Activated B cell treated with CpG ODN at 0.5 μM for 24 hours (primary cell): ENCODE measurements at regions of chr2 and their contacts with region 1.

Region 1: GRCh38 chr2:197216361-197216979 is 94.1 kb downstream of the ANKRD44 start:
- DNase-seq: no peak
- ATAC-seq: peak; percentile 71
- H3K4me3 Mint-ChIP-seq: peak overlapping the region; percentile 72
- H3K27ac Mint-ChIP-seq: peak overlapping the region; percentile 98
- H3K4me1 Mint-ChIP-seq: peaks cover 91% of the 10 kb centered on the region
- H3K27me3 Mint-ChIP-seq: no peaks in the 10 kb centered on the region
- CTCF ChIP-seq: no peak

Region 2: GRCh38 chr2:197184959-197185586 is 31.4 kb before region 1 on chr2:
- CTCF ChIA-PET with region 1: no interaction called
- POLR2A ChIA-PET with region 1: no interaction called
- intact Hi-C with region 1: no loop called
- DNase-seq: no peak
- ATAC-seq: peak; percentile 40
- H3K4me3 Mint-ChIP-seq: no peak overlapping the region
- H3K27ac Mint-ChIP-seq: peak overlapping the region; percentile 31
- H3K4me1 Mint-ChIP-seq: peaks cover 71% of the 10 kb centered on the region
- H3K27me3 Mint-ChIP-seq: no peaks in the 10 kb centered on the region
- CTCF ChIP-seq: no peak

Region 3: DNA sequence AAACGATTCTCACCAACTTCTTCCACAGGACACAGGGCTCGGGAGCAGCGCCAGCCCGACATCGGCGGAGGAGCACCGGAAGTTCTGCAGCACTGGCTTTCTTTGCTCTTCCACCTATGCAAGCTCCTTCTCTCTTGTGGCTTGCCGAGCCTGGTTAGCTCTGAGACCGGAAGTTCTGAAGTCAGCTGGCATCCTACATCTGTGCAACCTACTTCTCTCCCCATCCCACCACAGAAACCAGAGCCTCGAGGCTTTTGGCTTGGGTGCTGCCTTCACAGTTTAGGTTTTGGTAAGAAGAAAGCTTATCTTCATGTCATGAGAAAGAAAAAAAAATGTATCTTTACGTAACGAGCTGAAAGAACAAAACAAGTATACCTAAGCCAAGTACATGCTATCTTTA is 17.6 kb before region 1 on chr2:
- CTCF ChIA-PET with region 1: interaction called, 4 read pairs
- POLR2A ChIA-PET with region 1: interaction called, 15 read pairs
- intact Hi-C with region 1: loop called (anchors 1 kb)
- DNase-seq: peak; percentile 56
- ATAC-seq: peak; percentile 94
- H3K4me3 Mint-ChIP-seq: peak overlapping the region; percentile 88
- H3K27ac Mint-ChIP-seq: peak overlapping the region; percentile 96
- H3K4me1 Mint-ChIP-seq: peaks cover 83% of the 10 kb centered on the region
- H3K27me3 Mint-ChIP-seq: no peaks in the 10 kb centered on the region
- CTCF ChIP-seq: no peak

Region 4: DNA sequence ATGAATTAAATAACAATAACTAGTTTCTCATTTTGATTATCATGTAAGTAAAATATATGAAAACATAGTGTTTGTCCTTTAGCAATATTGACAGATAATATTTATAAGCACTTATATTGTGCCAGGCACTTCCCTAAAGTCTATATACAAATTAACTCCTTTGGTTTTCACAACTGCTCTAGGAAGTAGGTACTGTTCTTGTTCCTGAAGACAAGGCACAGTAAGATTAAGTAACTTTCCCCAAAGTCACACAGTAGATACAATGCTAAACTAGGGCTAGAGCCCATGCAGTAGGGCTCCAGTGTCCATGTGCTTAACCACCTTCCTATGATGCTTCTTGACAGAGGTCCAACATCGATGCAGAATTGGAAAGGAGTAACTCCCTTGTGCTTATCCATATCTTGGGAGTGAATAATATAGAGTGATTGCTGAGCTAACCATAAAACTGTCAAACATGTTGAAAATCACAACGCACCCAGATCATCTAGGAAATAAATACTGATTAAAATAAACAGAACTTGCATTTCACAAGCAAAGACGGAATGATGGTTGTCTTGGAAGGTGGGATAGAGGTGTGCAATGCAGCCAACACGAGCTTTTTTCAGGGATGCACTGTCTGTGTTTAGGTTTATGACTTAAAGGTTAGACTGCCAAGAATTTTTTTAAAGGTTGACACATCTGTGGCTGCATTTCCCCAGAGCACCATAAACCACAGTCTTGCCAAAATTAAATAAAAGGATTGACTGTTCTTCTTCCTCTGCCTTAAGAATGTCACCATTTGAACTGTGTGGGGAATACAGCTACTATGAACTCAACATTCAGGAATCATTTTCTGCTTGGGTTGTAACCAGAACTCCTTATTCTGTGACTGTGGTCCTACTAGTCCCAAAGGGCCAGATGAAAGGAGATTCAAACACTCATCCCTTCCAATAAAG is 13.3 kb after region 1 on chr2:
- CTCF ChIA-PET with region 1: no interaction called
- POLR2A ChIA-PET with region 1: interaction called, 4 read pairs
- intact Hi-C with region 1: loop called (anchors 1 kb)
- DNase-seq: no peak
- ATAC-seq: no peak
- H3K4me3 Mint-ChIP-seq: no peak overlapping the region
- H3K27ac Mint-ChIP-seq: peak overlapping the region; percentile 42
- H3K4me1 Mint-ChIP-seq: peaks cover 94% of the 10 kb centered on the region
- H3K27me3 Mint-ChIP-seq: no peaks in the 10 kb centered on the region
- CTCF ChIP-seq: no peak

Region 5: GRCh38 chr2:197239434-197239833 is 23.0 kb after region 1 on chr2:
- CTCF ChIA-PET with region 1: interaction called, 3 read pairs
- POLR2A ChIA-PET with region 1: interaction called, 12 read pairs
- intact Hi-C with region 1: loop called (anchors 1 kb)
- DNase-seq: no peak
- ATAC-seq: peak; percentile 45
- H3K4me3 Mint-ChIP-seq: peak overlapping the region; percentile 76
- H3K27ac Mint-ChIP-seq: peak overlapping the region; percentile 91
- H3K4me1 Mint-ChIP-seq: peaks cover 87% of the 10 kb centered on the region
- H3K27me3 Mint-ChIP-seq: no peaks in the 10 kb centered on the region
- CTCF ChIP-seq: no peak

Region 6: GRCh38 chr2:197369228-197369932 is 152.9 kb after region 1 on chr2:
- CTCF ChIA-PET with region 1: no interaction called
- POLR2A ChIA-PET with region 1: no interaction called
- intact Hi-C with region 1: no loop called
- DNase-seq: no peak
- ATAC-seq: no peak
- H3K4me3 Mint-ChIP-seq: no peak overlapping the region
- H3K27ac Mint-ChIP-seq: no peak overlapping the region
- H3K4me1 Mint-ChIP-seq: peaks cover 4% of the 10 kb centered on the region
- H3K27me3 Mint-ChIP-seq: no peaks in the 10 kb centered on the region
- CTCF ChIP-seq: no peak

Region 7: DNA sequence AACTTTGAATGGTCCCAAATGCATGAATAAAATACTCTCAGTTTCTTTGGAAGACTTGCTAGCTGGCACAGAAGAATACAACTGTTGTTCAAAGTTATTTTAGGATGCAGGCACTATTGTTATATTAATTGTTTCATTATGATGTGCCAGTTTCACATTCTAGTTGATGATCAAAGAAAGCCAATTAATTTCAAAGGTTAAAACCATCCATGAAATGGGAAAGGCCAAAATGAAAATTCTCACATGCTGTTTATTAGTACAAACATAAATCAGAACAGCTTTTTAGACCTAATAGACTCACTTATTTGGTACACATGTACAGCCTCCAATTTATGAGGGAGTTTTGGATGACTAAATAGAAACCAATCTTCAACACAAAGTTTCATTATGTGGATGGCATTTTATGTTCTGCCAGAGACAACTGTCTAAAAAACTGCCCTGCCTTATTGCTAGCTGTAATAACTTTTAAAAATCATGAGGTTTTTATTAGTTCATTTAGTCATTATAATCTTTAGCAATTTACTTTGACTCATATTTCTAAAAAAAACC is 416.7 kb after region 1 on chr2:
- CTCF ChIA-PET with region 1: no interaction called
- POLR2A ChIA-PET with region 1: no interaction called
- intact Hi-C with region 1: no loop called
- DNase-seq: no peak
- ATAC-seq: no peak
- H3K4me3 Mint-ChIP-seq: no peak overlapping the region
- H3K27ac Mint-ChIP-seq: no peak overlapping the region
- H3K4me1 Mint-ChIP-seq: no peaks in the 10 kb centered on the region
- H3K27me3 Mint-ChIP-seq: no peaks in the 10 kb centered on the region
- CTCF ChIP-seq: no peak